CD8-positive, alpha-beta memory T cell (primary cell): ENCODE measurements at regions of chr3 and their contacts with region 1.

Region 1: DNA sequence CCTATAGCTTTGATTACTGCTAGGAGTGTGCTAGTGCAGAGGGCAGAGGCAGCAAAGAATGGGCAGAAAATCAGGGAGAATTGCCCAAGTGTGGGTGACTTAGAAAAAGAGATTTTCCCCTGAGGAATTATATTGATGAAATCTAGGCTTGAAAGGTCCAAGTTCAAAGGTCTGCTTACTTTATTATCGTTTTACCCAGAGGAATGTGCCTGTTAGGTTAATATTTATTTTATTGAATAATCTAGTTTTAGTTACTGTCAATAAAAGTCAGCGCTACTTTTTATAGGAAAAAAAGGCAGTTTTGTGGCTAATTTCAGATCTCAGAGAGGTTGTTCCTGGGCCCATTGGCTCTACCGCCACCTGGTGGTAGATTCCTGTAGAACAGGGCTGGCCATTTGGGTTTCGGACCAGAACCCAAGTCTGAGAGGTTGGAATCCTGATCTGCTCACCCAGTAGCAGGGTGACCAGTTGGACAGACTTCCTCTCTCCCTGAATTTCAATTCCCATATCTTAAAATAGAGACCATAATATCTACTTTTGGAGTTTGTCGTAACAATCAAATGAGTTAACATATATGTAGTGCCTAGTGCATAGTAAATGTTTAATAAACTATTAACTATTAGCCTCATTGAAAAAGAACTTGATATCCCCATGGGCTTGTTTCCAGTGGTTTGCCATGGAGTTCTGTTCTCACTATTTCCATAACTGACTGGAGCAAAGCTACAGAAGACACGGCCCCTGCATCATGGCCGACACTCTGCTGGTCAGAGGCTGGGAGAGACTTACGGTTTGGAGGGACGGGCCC is 62.7 kb upstream of the ZNF148 start:
- DNase-seq: peak; percentile 35 to 71 (median 46)
- H3K4me3 ChIP-seq: no peak overlapping the region
- H3K4me3 Mint-ChIP-seq: no peak overlapping the region
- H3K27ac ChIP-seq: no peak overlapping the region
- H3K27ac Mint-ChIP-seq: no peak overlapping the region
- H3K4me1 ChIP-seq: no peaks in the 10 kb centered on the region
- H3K4me1 Mint-ChIP-seq: peaks cover 0 to 7% (median 4%) of the 10 kb centered on the region in 3 donors
- H3K27me3 ChIP-seq: no peaks in the 10 kb centered on the region
- H3K27me3 Mint-ChIP-seq: no peaks in the 10 kb centered on the region

Region 2: GRCh38 chr3:124761250-124761796 is 676.5 kb before region 1 on chr3:
- CTCF ChIA-PET with region 1: interaction called, 20 read pairs
- POLR2A ChIA-PET with region 1: no interaction called
- DNase-seq: peak; percentile 56 to 78 (median 61)
- H3K4me3 ChIP-seq: peak overlapping the region; percentile 2
- H3K4me3 Mint-ChIP-seq: peak overlapping the region in 6 of 7 donors; percentile 61 to 80 (median 72)
- H3K27ac ChIP-seq: no peak overlapping the region
- H3K27ac Mint-ChIP-seq: peak overlapping the region in 5 of 8 donors; percentile 20 to 70 (median 52)
- H3K4me1 ChIP-seq: no peaks in the 10 kb centered on the region
- H3K4me1 Mint-ChIP-seq: peaks cover 5 to 8% (median 5%) of the 10 kb centered on the region in 3 donors
- H3K27me3 ChIP-seq: no peaks in the 10 kb centered on the region
- H3K27me3 Mint-ChIP-seq: peaks cover 6 to 8% of the 10 kb centered on the region in 2 donors

Region 3: DNA sequence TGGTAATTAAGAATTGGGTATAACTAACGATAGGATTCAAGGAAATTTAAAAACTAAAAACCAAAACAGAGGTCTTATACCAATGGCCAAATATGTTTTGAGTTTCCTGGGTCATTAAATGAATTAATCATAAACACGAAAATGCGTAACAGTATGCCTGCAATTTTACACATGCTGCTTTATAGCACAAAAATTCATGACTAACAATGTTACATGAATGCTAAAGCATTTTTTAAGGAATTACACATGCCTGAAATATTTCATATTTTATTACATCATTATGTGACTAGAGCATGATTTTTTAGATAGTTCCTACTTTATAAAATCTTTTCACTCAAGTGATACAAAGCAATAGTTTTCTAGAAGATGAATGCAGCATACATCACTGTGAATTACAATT is 137.4 kb before region 1 on chr3:
- CTCF ChIA-PET with region 1: no interaction called
- POLR2A ChIA-PET with region 1: no interaction called
- DNase-seq: no peak
- H3K4me3 ChIP-seq: no peak overlapping the region
- H3K4me3 Mint-ChIP-seq: no peak overlapping the region
- H3K27ac ChIP-seq: no peak overlapping the region
- H3K27ac Mint-ChIP-seq: no peak overlapping the region
- H3K4me1 ChIP-seq: no peaks in the 10 kb centered on the region
- H3K4me1 Mint-ChIP-seq: peaks cover 34 to 60% (median 41%) of the 10 kb centered on the region in 3 donors
- H3K27me3 ChIP-seq: no peaks in the 10 kb centered on the region
- H3K27me3 Mint-ChIP-seq: no peaks in the 10 kb centered on the region